Dendritic cell treated with granulocyte-macrophage colony-stimulating factor and Interleukin-4, amounts not matched to agents 40 ng/mL and 50 ng/mL, for 4 days (primary cell): ENCODE measurements at regions of chr7 and their contacts with region 1.

Region 1: DNA sequence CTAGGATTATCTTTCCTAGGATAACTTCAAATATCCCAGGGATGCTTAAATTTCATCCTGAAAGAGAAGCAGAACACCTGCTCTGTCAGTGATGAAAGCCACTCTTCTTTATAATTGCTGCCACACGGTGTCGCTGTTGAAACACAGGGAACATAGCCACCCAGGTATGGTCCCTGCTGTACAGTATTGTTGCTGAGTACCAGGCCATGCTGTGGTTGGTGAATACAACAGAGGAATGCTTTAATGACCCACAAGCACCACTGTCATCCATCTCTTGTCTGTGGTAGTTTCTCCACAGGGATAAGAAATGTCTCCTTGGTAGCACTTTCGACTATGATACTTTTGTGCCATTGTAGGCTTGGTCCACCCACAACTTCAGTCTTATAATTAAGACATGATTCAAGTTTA is 70.6 kb upstream of the STARD3NL start:
- H3K4me3 Mint-ChIP-seq: no peak overlapping the region
- H3K27ac Mint-ChIP-seq: no peak overlapping the region
- H3K4me1 Mint-ChIP-seq: peaks cover 8% of the 10 kb centered on the region
- H3K27me3 Mint-ChIP-seq: peaks cover 2% of the 10 kb centered on the region

Region 2: DNA sequence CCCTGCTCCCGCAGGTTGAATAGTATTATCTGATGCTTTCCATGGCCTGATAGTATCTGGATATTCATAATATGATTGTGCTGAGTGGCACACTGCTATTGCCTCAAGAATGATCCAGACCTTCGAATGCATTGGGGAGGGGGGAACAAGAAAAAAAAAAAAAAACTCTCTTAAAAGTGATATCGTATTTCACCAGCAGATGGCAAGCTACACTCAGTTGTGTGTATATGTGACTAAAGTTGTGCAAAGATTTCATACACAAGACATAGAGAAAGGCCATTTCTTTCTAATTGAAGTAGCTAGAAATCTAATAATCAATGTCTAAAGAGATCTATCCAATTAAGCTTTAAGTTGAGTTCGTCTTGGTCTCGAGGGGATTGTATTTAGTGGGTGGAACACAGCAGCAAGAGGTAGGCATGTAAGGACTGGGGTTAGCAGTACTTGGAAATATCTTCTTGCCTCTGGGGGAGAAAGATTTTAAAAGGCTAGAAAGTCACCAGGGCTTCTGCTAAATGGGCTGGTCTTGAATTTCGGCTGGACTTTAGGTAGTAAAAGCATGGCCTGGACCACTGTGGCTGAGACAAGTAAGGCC is 206.2 kb before region 1 on chr7:
- intact Hi-C with region 1: loop called (anchors 1 kb)
- H3K4me3 Mint-ChIP-seq: no peak overlapping the region
- H3K27ac Mint-ChIP-seq: no peak overlapping the region
- H3K4me1 Mint-ChIP-seq: no peaks in the 10 kb centered on the region
- H3K27me3 Mint-ChIP-seq: peaks cover 2% of the 10 kb centered on the region

Region 3: GRCh38 chr7:37916673-37917660 is 190.5 kb before region 1 on chr7 and contains the start of gene SFRP4:
- intact Hi-C with region 1: loop called (anchors 5 kb)
- H3K4me3 Mint-ChIP-seq: peak within 1 kb of the TSS; percentile 68
- H3K27ac Mint-ChIP-seq: peak within 1 kb of the TSS; percentile 11
- H3K4me1 Mint-ChIP-seq: peaks cover 48% of the 10 kb centered on the region
- H3K27me3 Mint-ChIP-seq: peaks cover 64% of the 10 kb centered on the region

Region 4: GRCh38 chr7:38222481-38223096 is 115.1 kb after region 1 on chr7:
- intact Hi-C with region 1: loop called (anchors 1 kb)
- H3K4me3 Mint-ChIP-seq: no peak overlapping the region
- H3K27ac Mint-ChIP-seq: no peak overlapping the region
- H3K4me1 Mint-ChIP-seq: peaks cover 17% of the 10 kb centered on the region
- H3K27me3 Mint-ChIP-seq: no peaks in the 10 kb centered on the region

Region 5: GRCh38 chr7:38318803-38319416 is 211.4 kb after region 1 on chr7:
- intact Hi-C with region 1: loop called (anchors 5 kb)
- H3K4me3 Mint-ChIP-seq: no peak overlapping the region
- H3K27ac Mint-ChIP-seq: no peak overlapping the region
- H3K4me1 Mint-ChIP-seq: peaks cover 38% of the 10 kb centered on the region
- H3K27me3 Mint-ChIP-seq: peaks cover 5% of the 10 kb centered on the region

Region 6: DNA sequence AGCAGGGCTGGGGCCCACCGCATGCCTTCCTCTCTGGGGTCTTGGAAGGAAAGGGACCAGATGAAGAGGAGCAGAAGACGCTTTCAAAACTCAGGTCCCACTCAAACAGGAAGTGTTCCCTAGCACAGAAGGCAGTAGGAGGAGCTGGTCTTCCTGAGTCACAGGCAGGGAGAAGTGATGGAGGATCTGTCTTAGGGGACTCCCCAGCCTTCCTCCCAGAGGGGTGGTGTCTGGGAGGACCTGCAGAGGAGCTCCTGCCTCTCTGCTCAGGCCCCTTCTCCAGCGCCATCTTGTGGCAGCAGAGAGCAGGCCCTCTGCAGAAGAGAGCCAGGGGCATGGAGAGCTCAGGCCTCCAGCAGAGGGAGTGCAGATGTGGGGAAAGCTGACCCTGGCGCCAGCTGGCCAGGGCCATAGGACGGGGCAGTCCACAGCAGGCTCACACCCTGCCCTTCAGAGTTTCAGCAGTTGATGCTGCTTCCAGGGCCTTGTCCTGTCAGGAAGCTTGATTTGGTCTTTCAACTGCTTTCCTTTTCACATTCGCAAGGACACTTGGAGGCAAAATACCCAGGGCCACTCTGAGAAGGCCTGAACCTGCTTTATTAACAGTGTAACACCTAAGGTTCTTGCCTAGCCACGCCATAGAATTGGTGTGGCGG is 228.1 kb after region 1 on chr7:
- intact Hi-C with region 1: loop called (anchors 5 kb)
- H3K4me3 Mint-ChIP-seq: peak overlapping the region; percentile 77
- H3K27ac Mint-ChIP-seq: peak overlapping the region; percentile 97
- H3K4me1 Mint-ChIP-seq: peaks cover 86% of the 10 kb centered on the region
- H3K27me3 Mint-ChIP-seq: no peaks in the 10 kb centered on the region

Region 7: GRCh38 chr7:38369816-38370493 is 262.5 kb after region 1 on chr7:
- intact Hi-C with region 1: loop called (anchors 5 kb)
- H3K4me3 Mint-ChIP-seq: peak overlapping the region; percentile 19
- H3K27ac Mint-ChIP-seq: peak overlapping the region; percentile 86
- H3K4me1 Mint-ChIP-seq: peaks cover 44% of the 10 kb centered on the region
- H3K27me3 Mint-ChIP-seq: no peaks in the 10 kb centered on the region